Naive thymus-derived CD4-positive, alpha-beta T cell (primary cell): ENCODE measurements at regions of chr10 and their contacts with region 1.

Region 1: GRCh38 chr10:110918643-110919363 is at the start of gene BBIP1:
- DNase-seq: peak in 4 of 9 donors; percentile 70 to 98 (median 90)
- ATAC-seq: peak; percentile 96
- H3K4me3 ChIP-seq: peak within 1 kb of the TSS; percentile 97
- H3K4me3 Mint-ChIP-seq: peak within 1 kb of the TSS; percentile 86 to 100 (median 98)
- H3K27ac ChIP-seq: peak within 1 kb of the TSS; percentile 100
- H3K27ac Mint-ChIP-seq: peak within 1 kb of the TSS; percentile 97 to 100 (median 99)
- H3K4me1 ChIP-seq: peaks cover 7 to 17% of the 10 kb centered on the region in 2 donors
- H3K4me1 Mint-ChIP-seq: peaks cover 24 to 66% (median 59%) of the 10 kb centered on the region in 7 donors
- H3K27me3 ChIP-seq: no peaks in the 10 kb centered on the region
- H3K27me3 Mint-ChIP-seq: no peaks in the 10 kb centered on the region
- total RNA-seq, gene BBIP1: 22.2 to 64.2 (median 44.6) TPM

Region 2: DNA sequence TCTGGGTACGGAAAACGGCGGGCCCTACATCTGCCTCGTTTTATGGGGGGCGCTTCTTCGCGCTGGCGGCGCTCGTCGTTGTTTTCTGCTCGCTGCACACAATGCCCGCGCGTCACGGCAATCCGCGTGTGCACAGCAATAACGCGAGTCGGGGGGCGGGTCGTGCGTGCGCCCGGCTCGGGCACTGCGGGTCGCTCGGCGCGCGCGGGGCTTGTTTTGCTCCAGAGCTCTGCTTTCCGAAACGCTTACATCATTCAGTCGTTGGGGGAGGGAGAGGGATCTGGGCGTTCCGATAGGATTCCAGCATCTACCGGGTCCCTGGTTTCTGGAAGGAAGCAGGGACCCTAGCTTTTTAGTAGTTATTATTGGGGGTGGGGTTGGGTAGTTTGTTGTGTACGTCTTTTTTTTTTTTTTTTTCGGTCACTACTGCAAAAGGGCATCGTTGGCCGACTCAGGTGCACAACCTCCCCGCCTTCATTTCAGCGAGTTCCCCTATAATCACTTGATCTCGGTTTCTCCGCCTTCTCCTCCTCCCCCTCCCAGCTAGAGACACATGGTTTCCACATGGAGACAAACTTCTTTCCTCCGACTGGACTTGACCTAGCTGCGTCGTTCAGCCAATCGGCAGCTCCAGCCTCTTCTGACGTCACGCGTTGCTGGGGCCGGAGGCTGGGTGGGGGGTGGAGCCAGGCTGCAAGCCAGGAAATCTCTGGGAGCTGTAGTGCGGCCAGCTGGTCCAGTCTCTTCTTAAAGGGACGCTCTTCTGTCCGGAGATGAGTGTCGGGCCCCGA is 707.9 kb before region 1 on chr10:
- CTCF ChIA-PET with region 1: no interaction called
- POLR2A ChIA-PET with region 1: interaction called, 3 read pairs
- intact Hi-C with region 1: loop called (anchors 1 to 5 kb)
- DNase-seq: peak; percentile 81 to 92 (median 89)
- ATAC-seq: peak; percentile 76
- H3K4me3 ChIP-seq: peak overlapping the region; percentile 69
- H3K4me3 Mint-ChIP-seq: peak overlapping the region; percentile 93 to 99 (median 97)
- H3K27ac ChIP-seq: peak overlapping the region; percentile 95
- H3K27ac Mint-ChIP-seq: peak overlapping the region; percentile 95 to 99 (median 98)
- H3K4me1 ChIP-seq: peaks cover 21 to 46% of the 10 kb centered on the region in 2 donors
- H3K4me1 Mint-ChIP-seq: peaks cover 34 to 64% (median 57%) of the 10 kb centered on the region in 7 donors
- H3K27me3 ChIP-seq: no peaks in the 10 kb centered on the region
- H3K27me3 Mint-ChIP-seq: peaks cover 0 to 10% (median 7%) of the 10 kb centered on the region in 5 donors

Region 3: GRCh38 chr10:110497438-110498086 is 421.2 kb before region 1 on chr10 and contains the start of gene DUSP5:
- CTCF ChIA-PET with region 1: no interaction called
- POLR2A ChIA-PET with region 1: no interaction called
- intact Hi-C with region 1: loop called (anchors 1 kb)
- DNase-seq: peak; percentile 91 to 99 (median 96)
- ATAC-seq: peak; percentile 96
- H3K4me3 ChIP-seq: peak within 1 kb of the TSS; percentile 77
- H3K4me3 Mint-ChIP-seq: peak within 1 kb of the TSS; percentile 89 to 97 (median 92)
- H3K27ac ChIP-seq: peak within 1 kb of the TSS; percentile 71
- H3K27ac Mint-ChIP-seq: peak within 1 kb of the TSS; percentile 83 to 94 (median 91)
- H3K4me1 ChIP-seq: peaks cover 32 to 43% of the 10 kb centered on the region in 2 donors
- H3K4me1 Mint-ChIP-seq: peaks cover 43 to 57% (median 50%) of the 10 kb centered on the region in 7 donors
- H3K27me3 ChIP-seq: no peaks in the 10 kb centered on the region
- H3K27me3 Mint-ChIP-seq: peaks cover 0 to 3% (median 0%) of the 10 kb centered on the region in 5 donors
- total RNA-seq, gene DUSP5: 0.38 to 57.2 (median 35.7) TPM

Region 4: GRCh38 chr10:110758898-110759297 is 159.9 kb before region 1 on chr10:
- CTCF ChIA-PET with region 1: no interaction called
- POLR2A ChIA-PET with region 1: no interaction called
- intact Hi-C with region 1: no loop called
- DNase-seq: no peak
- ATAC-seq: no peak
- H3K4me3 ChIP-seq: no peak overlapping the region
- H3K4me3 Mint-ChIP-seq: no peak overlapping the region
- H3K27ac ChIP-seq: no peak overlapping the region
- H3K27ac Mint-ChIP-seq: no peak overlapping the region
- H3K4me1 ChIP-seq: peaks cover 0 to 7% of the 10 kb centered on the region in 2 donors
- H3K4me1 Mint-ChIP-seq: peaks cover 2 to 21% (median 14%) of the 10 kb centered on the region in 7 donors
- H3K27me3 ChIP-seq: no peaks in the 10 kb centered on the region
- H3K27me3 Mint-ChIP-seq: peaks cover 0 to 3% (median 0%) of the 10 kb centered on the region in 5 donors

Region 5: DNA sequence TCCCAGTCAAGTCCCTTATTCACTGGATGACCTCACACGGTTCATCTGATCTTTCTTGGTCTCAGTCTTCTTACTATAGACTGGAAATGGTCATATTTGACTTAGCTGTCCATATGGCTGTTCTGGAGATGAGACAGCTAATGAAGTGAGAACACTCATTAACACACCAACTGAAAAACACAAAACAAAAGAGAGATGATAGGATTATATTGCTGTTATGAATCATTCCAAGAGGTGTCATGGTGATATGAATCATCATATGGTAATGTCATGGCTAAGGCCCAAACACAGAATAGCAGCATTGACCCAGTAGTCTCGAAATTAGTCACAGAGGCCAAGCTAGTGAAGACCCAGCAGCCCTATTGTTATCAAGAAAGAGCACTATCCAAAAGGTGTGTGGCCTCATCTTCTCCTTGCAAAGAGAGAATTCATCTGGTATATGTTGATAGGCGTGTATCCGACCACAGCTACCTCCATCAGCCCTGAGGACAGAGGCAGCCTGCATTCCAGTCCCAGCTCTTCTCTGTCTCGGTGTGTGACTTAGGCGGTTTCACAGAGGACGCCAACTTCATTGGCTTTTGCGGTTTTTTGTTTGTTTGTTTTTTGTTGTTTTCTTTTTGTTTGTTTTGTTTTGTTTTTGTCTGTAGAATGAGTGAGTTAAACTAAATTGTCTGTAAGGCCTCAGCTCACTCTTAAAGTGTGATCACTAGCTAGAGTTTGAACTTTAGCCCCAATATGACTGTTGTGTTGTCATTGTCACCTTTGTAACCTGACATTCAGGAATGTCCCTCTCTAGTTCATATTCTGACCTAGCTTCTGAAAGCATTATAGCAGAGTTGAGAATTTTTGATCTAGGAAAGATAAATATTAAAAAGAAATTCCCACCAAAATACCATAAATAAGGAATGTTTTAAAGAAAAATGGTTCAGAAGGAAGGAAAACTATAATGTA is 144.5 kb before region 1 on chr10:
- CTCF ChIA-PET with region 1: no interaction called
- POLR2A ChIA-PET with region 1: no interaction called
- intact Hi-C with region 1: loop called in 1 of 2 experiments (anchors 1 kb)
- DNase-seq: peak in 1 of 9 donors; percentile 54
- ATAC-seq: peak; percentile 41
- H3K4me3 ChIP-seq: no peak overlapping the region
- H3K4me3 Mint-ChIP-seq: peak overlapping the region in 1 of 10 donors; percentile 42
- H3K27ac ChIP-seq: no peak overlapping the region
- H3K27ac Mint-ChIP-seq: peak overlapping the region in 2 of 9 donors; percentile 47 to 88
- H3K4me1 ChIP-seq: peaks cover 0 to 11% of the 10 kb centered on the region in 2 donors
- H3K4me1 Mint-ChIP-seq: peaks cover 2 to 39% (median 9%) of the 10 kb centered on the region in 7 donors
- H3K27me3 ChIP-seq: no peaks in the 10 kb centered on the region
- H3K27me3 Mint-ChIP-seq: peaks cover 0 to 3% (median 0%) of the 10 kb centered on the region in 5 donors

Region 6: DNA sequence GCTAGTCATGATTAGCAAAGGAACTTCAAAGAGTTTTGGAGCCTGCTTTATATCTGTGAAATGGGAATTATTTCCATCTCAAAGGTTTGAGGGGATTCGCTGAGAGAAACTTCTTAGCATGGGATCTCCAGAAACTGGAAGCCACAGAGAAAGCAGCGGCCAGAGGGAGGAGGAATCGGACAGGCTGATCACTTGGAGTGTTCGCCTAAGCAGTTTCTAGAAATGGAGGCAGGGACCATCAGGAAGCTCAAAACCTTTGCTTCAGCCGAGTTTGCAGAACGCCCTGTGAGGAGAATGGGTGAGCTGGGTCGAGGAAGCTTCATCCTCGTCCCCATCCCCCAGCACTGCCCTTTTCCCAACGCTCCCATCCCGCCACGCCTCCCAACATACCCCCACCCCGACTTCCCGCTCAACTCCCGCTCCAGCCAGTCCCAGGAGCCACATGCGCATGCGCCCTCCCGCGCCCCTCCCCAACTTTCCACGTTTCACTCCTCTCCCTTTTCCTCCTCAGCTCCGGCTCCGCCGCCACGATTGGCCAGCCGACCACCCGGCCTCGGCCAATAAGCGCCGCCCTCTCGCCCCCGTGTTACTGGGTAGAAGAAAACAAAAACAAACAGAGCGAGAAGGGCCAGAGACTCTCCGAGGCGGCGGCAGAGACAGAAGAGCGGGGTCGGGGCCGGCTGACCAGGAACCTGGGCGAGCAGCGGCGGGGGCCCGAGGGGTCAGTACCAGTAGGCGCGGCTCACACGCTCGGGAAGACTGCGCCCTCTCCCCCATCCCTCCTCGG is 47.3 kb before region 1 on chr10 and contains the start of gene PDCD4:
- CTCF ChIA-PET with region 1: no interaction called
- POLR2A ChIA-PET with region 1: interaction called, 8 read pairs
- intact Hi-C with region 1: loop called (anchors 1 kb)
- DNase-seq: peak; percentile 83 to 98 (median 90)
- ATAC-seq: peak; percentile 78
- H3K4me3 ChIP-seq: peak within 1 kb of the TSS; percentile 78
- H3K4me3 Mint-ChIP-seq: peak within 1 kb of the TSS; percentile 79 to 99 (median 96)
- H3K27ac ChIP-seq: peak within 1 kb of the TSS; percentile 100
- H3K27ac Mint-ChIP-seq: peak within 1 kb of the TSS; percentile 95 to 100 (median 99)
- H3K4me1 ChIP-seq: peaks cover 53 to 71% of the 10 kb centered on the region in 2 donors
- H3K4me1 Mint-ChIP-seq: peaks cover 43 to 77% (median 68%) of the 10 kb centered on the region in 7 donors
- H3K27me3 ChIP-seq: no peaks in the 10 kb centered on the region
- H3K27me3 Mint-ChIP-seq: peaks cover 0 to 2% (median 0%) of the 10 kb centered on the region in 5 donors
- total RNA-seq, gene PDCD4: 93.7 to 283 (median 223) TPM

Region 7: DNA sequence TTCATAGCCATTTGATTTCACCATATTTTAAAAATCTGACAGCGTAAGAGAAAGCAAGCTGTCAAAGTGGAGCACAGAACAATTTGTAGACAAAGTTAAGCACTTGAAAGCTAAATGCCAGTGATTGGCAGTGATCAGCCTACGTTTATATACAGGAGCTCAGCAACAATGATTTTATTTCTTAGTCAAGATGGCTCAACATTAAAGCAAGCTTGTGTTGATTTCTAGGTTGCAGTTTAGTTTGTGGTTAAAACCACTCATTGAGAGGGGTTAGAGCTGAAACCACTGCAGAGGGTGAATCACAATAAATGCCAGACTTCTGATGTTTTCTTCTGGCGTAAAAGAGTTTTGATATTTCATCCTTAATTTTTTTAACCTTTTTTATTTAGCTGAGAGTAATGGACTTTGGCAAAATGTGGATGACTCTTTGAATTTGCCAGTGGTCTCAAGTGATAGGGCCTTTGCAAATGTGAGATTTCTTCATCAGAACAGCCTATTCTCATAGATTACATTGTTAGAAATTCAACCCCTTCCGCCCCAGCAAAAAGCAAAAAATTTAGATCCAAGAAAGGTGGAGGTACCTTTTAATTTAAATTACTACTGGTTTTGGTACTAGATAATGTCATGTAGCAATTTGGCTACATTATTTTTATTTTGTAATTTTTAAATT is 74.4 kb after region 1 on chr10:
- CTCF ChIA-PET with region 1: no interaction called
- POLR2A ChIA-PET with region 1: interaction called, 3 read pairs
- intact Hi-C with region 1: loop called (anchors 1 kb)
- DNase-seq: peak in 7 of 9 donors; percentile 44 to 74 (median 59)
- ATAC-seq: peak; percentile 95
- H3K4me3 ChIP-seq: no peak overlapping the region
- H3K4me3 Mint-ChIP-seq: peak overlapping the region in 8 of 10 donors; percentile 27 to 78 (median 69)
- H3K27ac ChIP-seq: no peak overlapping the region
- H3K27ac Mint-ChIP-seq: peak overlapping the region; percentile 38 to 83 (median 63)
- H3K4me1 ChIP-seq: peaks cover 6 to 21% of the 10 kb centered on the region in 2 donors
- H3K4me1 Mint-ChIP-seq: peaks cover 27 to 62% (median 52%) of the 10 kb centered on the region in 7 donors
- H3K27me3 ChIP-seq: no peaks in the 10 kb centered on the region
- H3K27me3 Mint-ChIP-seq: no peaks in the 10 kb centered on the region